ENCODE measurements at regions of chr6 and their contacts with region 1.

Region 1: DNA sequence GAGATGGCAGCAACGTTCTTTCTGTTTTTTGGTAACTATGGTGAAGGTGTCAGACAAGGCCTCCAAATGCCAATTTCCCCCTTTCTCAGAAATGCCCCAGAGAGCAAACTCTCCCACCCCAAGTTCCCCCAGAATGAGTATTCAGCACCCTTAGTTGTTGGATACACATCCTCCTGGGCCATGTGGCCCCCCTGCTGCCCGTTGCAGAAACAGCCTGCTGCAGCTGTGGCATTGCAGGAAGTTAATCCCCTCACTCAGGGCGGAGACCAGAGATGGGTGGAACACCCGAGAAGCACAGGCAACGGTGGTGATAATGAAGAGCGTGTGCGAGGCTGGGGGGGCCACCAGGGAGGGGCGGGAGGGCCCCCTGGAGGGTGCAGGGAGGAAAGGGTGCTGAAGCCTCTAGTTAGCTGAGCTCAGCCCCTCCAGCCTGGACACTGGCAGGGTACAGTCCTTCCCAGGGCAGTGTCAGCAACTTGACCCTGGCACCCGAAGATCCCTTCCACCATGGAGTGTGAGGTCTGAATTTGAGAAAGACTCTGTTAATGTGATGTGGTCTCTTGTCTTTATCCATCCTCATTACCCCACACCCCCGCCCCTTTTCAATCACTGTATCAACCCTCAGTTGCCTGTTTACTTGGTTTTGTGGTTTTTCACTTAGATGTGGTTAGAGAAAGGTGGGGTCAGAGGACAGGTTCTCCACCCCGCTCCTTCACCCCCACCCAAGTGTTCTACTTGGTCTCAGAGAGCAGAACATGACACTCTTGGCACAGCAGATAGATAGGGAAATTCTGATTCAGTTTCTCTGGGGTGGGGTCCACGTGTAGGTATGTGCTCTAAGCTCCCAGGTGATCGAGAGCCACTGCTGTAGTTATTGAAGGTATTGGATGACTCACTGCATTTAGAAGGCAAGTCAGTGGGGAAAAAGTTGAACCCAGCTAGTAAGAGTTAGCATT is 208.8 kb upstream of the SUPT3H start:
- DNase-seq: peak; percentile 22 to 90 (median 68)
- ATAC-seq: peak; percentile 82
- H3K4me3 ChIP-seq: peak overlapping the region; percentile 6 to 13
- H3K4me3 Mint-ChIP-seq: peak overlapping the region; percentile 83
- H3K27ac ChIP-seq: peak overlapping the region in 1 of 2 experiments; percentile 6
- H3K27ac Mint-ChIP-seq: peak overlapping the region; percentile 92
- H3K4me1 ChIP-seq: peaks cover 56% of the 10 kb centered on the region
- H3K4me1 Mint-ChIP-seq: peaks cover 63% of the 10 kb centered on the region
- H3K27me3 ChIP-seq: no peaks in the 10 kb centered on the region
- H3K27me3 Mint-ChIP-seq: no peaks in the 10 kb centered on the region
- CTCF ChIP-seq: no peak

Region 2: DNA sequence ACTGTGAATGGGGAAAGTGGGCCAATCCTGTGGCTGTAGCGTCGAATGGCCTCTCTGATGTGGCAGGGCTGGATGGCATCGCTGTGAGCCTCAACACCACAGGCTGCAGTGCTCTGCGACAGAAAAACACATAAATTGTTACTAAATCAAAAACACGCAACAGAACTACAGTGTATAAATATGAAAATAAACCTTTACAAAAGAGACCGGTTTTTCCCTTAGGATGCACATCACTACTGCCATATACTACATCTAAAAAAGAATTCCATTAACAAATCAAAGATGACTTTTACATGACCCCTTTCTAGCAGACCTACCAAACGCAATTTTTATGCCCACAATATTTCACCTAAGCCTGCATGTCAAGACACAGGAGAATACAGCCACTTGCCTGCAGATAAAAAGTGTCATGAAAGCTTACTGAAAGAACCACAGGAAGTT is 653.8 kb before region 1 on chr6:
- CTCF ChIA-PET with region 1: no interaction called
- POLR2A ChIA-PET with region 1: no interaction called
- intact Hi-C with region 1: loop called in 1 of 2 experiments (anchors 10 kb)
- DNase-seq: peak; percentile 28 to 87 (median 63)
- ATAC-seq: peak; percentile 79
- H3K4me3 ChIP-seq: peak overlapping the region; percentile 33 to 53
- H3K4me3 Mint-ChIP-seq: peak overlapping the region; percentile 87
- H3K27ac ChIP-seq: peak overlapping the region; percentile 74 to 81
- H3K27ac Mint-ChIP-seq: peak overlapping the region; percentile 98
- H3K4me1 ChIP-seq: peaks cover 45% of the 10 kb centered on the region
- H3K4me1 Mint-ChIP-seq: peaks cover 59% of the 10 kb centered on the region
- H3K27me3 ChIP-seq: no peaks in the 10 kb centered on the region
- H3K27me3 Mint-ChIP-seq: no peaks in the 10 kb centered on the region
- CTCF ChIP-seq: no peak

Region 3: DNA sequence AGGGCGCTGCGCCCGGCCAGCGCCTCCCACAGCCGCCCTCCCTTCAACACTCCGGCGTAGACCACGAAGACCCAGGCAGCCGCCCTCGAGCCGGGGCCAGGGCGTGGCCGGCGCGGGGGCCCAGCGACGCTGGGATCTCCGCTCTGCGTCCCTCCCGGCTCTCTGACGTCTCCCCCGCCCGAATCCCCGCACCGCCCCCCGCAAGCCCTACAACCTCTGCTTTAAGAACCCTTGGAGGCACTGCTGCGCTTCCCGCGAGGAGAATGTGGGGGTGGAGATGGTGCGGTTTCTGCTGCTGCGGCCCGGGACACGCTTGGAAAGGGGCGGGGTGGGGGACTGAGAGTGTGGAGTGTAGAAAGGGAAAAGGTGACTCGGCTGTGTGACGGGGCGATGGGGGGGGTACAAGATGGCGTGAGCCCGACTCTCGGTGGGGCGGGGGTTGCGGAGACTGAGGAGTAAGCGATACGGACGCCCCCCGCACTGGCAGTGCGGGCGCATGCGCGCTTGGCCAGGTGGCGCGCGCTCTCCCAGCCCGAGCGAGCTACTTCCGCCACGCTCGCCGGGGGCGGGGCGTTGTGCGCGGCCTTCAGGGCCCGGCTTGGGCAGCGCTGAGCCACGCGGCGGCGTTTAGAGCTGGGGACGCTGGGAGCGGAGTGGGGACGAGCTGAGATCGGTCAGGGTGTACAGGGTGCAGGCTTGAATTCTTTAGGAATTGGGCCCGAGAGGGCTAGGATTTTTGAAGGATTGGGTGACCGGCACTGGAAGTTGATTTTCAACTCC is 208.8 kb before region 1 on chr6 and contains the start of gene SUPT3H:
- CTCF ChIA-PET with region 1: no interaction called
- POLR2A ChIA-PET with region 1: no interaction called
- intact Hi-C with region 1: loop called in 1 of 2 experiments (anchors 5 kb)
- DNase-seq: peak; percentile 79 to 98 (median 91)
- ATAC-seq: peak; percentile 79
- H3K4me3 ChIP-seq: peak within 1 kb of the TSS; percentile 73 to 90
- H3K4me3 Mint-ChIP-seq: peak within 1 kb of the TSS; percentile 96
- H3K27ac ChIP-seq: peak within 1 kb of the TSS; percentile 83 to 95
- H3K27ac Mint-ChIP-seq: peak within 1 kb of the TSS; percentile 99
- H3K4me1 ChIP-seq: peaks cover 8% of the 10 kb centered on the region
- H3K4me1 Mint-ChIP-seq: peaks cover 29% of the 10 kb centered on the region
- H3K27me3 ChIP-seq: no peaks in the 10 kb centered on the region
- H3K27me3 Mint-ChIP-seq: no peaks in the 10 kb centered on the region
- CTCF ChIP-seq: no peak
- total RNA-seq, gene SUPT3H: 9.4 to 10.7 TPM

Region 4: DNA sequence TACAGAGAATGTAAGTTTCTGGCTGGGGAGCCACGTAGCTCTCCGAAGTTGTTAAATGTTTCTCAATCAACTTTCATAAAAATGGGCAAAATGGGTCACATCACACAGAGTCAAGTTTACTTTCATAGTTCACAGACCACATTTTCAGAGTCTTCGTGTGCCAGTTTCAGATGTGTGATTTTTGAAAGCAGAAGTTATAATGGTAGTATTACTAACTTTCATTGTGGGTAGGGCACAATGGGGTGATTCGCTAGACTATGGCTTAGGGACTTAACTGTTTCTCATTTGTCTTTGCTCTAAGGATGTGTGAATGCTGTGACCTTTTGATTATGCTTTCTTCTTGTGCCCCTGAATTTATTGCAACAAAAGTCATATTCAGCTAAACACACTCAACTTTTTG is 99.8 kb before region 1 on chr6:
- CTCF ChIA-PET with region 1: no interaction called
- POLR2A ChIA-PET with region 1: no interaction called
- intact Hi-C with region 1: loop called in 1 of 2 experiments (anchors 2 kb)
- DNase-seq: peak in 1 of 9 experiments; percentile 9
- ATAC-seq: peak; percentile 45
- H3K4me3 ChIP-seq: no peak overlapping the region
- H3K4me3 Mint-ChIP-seq: no peak overlapping the region
- H3K27ac ChIP-seq: no peak overlapping the region
- H3K27ac Mint-ChIP-seq: peak overlapping the region; percentile 16
- H3K4me1 ChIP-seq: peaks cover 27% of the 10 kb centered on the region
- H3K4me1 Mint-ChIP-seq: peaks cover 39% of the 10 kb centered on the region
- H3K27me3 ChIP-seq: no peaks in the 10 kb centered on the region
- H3K27me3 Mint-ChIP-seq: no peaks in the 10 kb centered on the region
- CTCF ChIP-seq: no peak

Region 5: GRCh38 chr6:45555981-45556771 is 30.3 kb before region 1 on chr6:
- CTCF ChIA-PET with region 1: no interaction called
- POLR2A ChIA-PET with region 1: no interaction called
- intact Hi-C with region 1: no loop called
- DNase-seq: no peak
- ATAC-seq: no peak
- H3K4me3 ChIP-seq: no peak overlapping the region
- H3K4me3 Mint-ChIP-seq: no peak overlapping the region
- H3K27ac ChIP-seq: no peak overlapping the region
- H3K27ac Mint-ChIP-seq: no peak overlapping the region
- H3K4me1 ChIP-seq: no peaks in the 10 kb centered on the region
- H3K4me1 Mint-ChIP-seq: peaks cover 5% of the 10 kb centered on the region
- H3K27me3 ChIP-seq: no peaks in the 10 kb centered on the region
- H3K27me3 Mint-ChIP-seq: no peaks in the 10 kb centered on the region
- CTCF ChIP-seq: no peak

Region 6: GRCh38 chr6:45626087-45626891 is 39.8 kb after region 1 on chr6:
- CTCF ChIA-PET with region 1: no interaction called
- POLR2A ChIA-PET with region 1: no interaction called
- intact Hi-C with region 1: loop called in 1 of 2 experiments (anchors 1 kb)
- DNase-seq: no peak
- ATAC-seq: no peak
- H3K4me3 ChIP-seq: no peak overlapping the region
- H3K4me3 Mint-ChIP-seq: no peak overlapping the region
- H3K27ac ChIP-seq: no peak overlapping the region
- H3K27ac Mint-ChIP-seq: no peak overlapping the region
- H3K4me1 ChIP-seq: no peaks in the 10 kb centered on the region
- H3K4me1 Mint-ChIP-seq: no peaks in the 10 kb centered on the region
- H3K27me3 ChIP-seq: no peaks in the 10 kb centered on the region
- H3K27me3 Mint-ChIP-seq: no peaks in the 10 kb centered on the region
- CTCF ChIP-seq: no peak

Region 7: GRCh38 chr6:47221565-47221964 is 1635.1 kb after region 1 on chr6:
- CTCF ChIA-PET with region 1: no interaction called
- POLR2A ChIA-PET with region 1: no interaction called
- intact Hi-C with region 1: no loop called
- DNase-seq: no peak
- ATAC-seq: no peak
- H3K4me3 ChIP-seq: no peak overlapping the region
- H3K4me3 Mint-ChIP-seq: no peak overlapping the region
- H3K27ac ChIP-seq: no peak overlapping the region
- H3K27ac Mint-ChIP-seq: no peak overlapping the region
- H3K4me1 ChIP-seq: no peaks in the 10 kb centered on the region
- H3K4me1 Mint-ChIP-seq: no peaks in the 10 kb centered on the region
- H3K27me3 ChIP-seq: no peaks in the 10 kb centered on the region
- H3K27me3 Mint-ChIP-seq: no peaks in the 10 kb centered on the region
- CTCF ChIP-seq: no peak

Region 8: GRCh38 chr6:47375426-47375825 is 1788.9 kb after region 1 on chr6:
- CTCF ChIA-PET with region 1: no interaction called
- POLR2A ChIA-PET with region 1: no interaction called
- intact Hi-C with region 1: no loop called
- DNase-seq: no peak
- ATAC-seq: no peak
- H3K4me3 ChIP-seq: no peak overlapping the region
- H3K4me3 Mint-ChIP-seq: no peak overlapping the region
- H3K27ac ChIP-seq: no peak overlapping the region
- H3K27ac Mint-ChIP-seq: no peak overlapping the region
- H3K4me1 ChIP-seq: no peaks in the 10 kb centered on the region
- H3K4me1 Mint-ChIP-seq: no peaks in the 10 kb centered on the region
- H3K27me3 ChIP-seq: no peaks in the 10 kb centered on the region
- H3K27me3 Mint-ChIP-seq: peaks cover 12% of the 10 kb centered on the region
- CTCF ChIP-seq: no peak

Region 9: DNA sequence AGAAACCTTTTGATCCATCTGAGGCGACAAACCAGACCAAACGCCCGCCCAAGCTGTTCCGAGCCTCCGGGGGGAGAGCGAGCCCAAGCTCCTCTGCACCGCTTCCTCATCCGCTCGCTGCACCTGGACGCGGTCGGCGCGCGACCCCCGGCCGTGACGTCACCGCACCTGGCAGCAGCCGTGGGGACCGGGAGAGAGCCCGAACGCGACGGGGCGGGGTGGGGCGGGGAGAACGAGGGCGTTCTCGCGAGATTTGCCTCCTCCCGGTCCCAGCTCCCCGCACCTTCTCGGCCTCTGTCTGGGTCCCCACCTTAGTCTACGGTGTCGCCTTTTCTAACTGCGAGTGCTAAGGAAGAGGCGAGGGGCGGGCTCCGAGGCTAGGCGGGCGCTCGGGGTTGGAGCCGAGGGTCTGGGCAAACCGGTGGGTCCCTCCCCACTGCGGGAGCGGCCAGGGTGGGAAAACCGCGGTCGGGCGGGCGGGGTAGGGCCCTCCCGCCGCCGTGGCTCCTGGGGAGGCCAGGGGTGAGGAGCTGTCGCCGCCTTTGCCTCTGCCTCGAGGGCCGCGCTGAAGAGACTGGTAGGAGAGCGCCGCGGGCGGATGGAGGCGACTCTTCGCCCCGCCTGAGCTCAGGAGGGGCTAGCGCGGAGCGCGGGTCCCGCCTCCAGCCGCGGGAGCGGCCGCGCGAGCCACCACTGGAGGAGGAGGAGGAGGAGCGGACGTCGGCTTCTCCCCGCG is 1891.2 kb after region 1 on chr6 and contains the start of gene CD2AP:
- CTCF ChIA-PET with region 1: no interaction called
- POLR2A ChIA-PET with region 1: no interaction called
- intact Hi-C with region 1: loop called in 1 of 2 experiments (anchors 5 kb)
- DNase-seq: peak; percentile 86 to 97 (median 94)
- ATAC-seq: peak; percentile 82
- H3K4me3 ChIP-seq: peak within 1 kb of the TSS; percentile 68 to 76
- H3K4me3 Mint-ChIP-seq: peak within 1 kb of the TSS; percentile 97
- H3K27ac ChIP-seq: peak within 1 kb of the TSS; percentile 89 to 94
- H3K27ac Mint-ChIP-seq: peak within 1 kb of the TSS; percentile 96
- H3K4me1 ChIP-seq: peaks cover 24% of the 10 kb centered on the region
- H3K4me1 Mint-ChIP-seq: peaks cover 46% of the 10 kb centered on the region
- H3K27me3 ChIP-seq: no peaks in the 10 kb centered on the region
- H3K27me3 Mint-ChIP-seq: no peaks in the 10 kb centered on the region
- CTCF ChIP-seq: no peak
- total RNA-seq, gene CD2AP: 43.0 to 51.1 TPM

Measured in CD8-positive, alpha-beta T cell (primary cell).